CD14-positive monocyte (primary cell): ENCODE measurements at regions of chr3 and their contacts with region 1.

Region 1: DNA sequence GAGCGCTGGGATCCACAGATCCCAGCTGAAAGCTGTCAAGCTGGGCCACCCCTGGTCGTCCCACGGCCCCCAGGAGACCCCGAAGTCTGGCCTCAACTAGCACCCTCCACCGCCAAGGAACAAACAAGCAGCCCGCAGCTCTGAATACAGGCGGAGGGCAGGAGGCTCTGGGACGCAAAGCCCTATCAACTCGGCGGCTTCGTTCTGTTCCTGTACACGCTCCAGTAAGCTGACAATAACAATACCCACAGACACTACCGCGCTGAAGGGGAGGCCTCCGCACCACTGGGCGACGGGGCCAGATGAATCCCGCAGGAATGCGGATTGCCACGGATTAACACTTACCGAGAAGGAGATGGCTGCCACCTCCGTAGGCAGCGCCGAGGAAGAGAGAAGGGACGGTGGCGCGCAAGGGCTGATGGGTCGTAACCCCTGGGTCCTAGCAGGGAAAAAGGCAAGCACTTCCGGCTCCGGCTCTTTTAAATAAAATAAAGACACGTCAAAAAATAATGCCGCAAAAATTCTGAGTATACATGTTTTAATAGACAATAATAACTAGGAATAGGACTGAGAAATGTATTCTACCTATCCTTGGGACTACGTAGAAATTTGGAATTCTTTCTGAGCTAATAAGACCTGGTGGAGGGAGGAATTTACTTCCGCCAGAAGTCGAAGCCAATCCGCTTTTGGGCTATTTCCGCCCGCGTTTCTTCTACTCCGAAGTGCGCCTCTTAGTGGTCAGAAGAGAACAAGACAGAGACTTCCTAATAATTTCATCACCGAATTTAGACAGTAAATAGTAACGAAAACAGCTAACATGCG is at the start of gene RPL32:
- DNase-seq: peak; percentile 94 to 97 (median 96)
- H3K4me3 ChIP-seq: peak within 1 kb of the TSS; percentile 84 to 95 (median 85)
- H3K4me3 Mint-ChIP-seq: peak within 1 kb of the TSS; percentile 96 to 97
- H3K27ac ChIP-seq: peak within 1 kb of the TSS; percentile 88 to 98
- H3K27ac Mint-ChIP-seq: peak within 1 kb of the TSS; percentile 97 to 100 (median 99)
- H3K4me1 ChIP-seq: peaks cover 16 to 22% of the 10 kb centered on the region in 2 donors
- H3K4me1 Mint-ChIP-seq: peaks cover 42% of the 10 kb centered on the region
- H3K27me3 ChIP-seq: no peaks in the 10 kb centered on the region
- H3K27me3 Mint-ChIP-seq: peaks cover 0 to 2% (median 0%) of the 10 kb centered on the region in 3 donors
- CTCF ChIP-seq: peak; percentile 86
- polyA plus RNA-seq, gene RPL32: 932 to 1,052 (median 942) TPM

Region 2: GRCh38 chr3:12556671-12557472 is 284.5 kb before region 1 on chr3 and contains the start of gene MKRN2:
- intact Hi-C with region 1: loop called in 1 of 2 experiments (anchors 5 kb)
- DNase-seq: peak; percentile 82 to 83 (median 82)
- H3K4me3 ChIP-seq: peak within 1 kb of the TSS; percentile 48 to 89 (median 75)
- H3K4me3 Mint-ChIP-seq: peak within 1 kb of the TSS; percentile 83 to 97
- H3K27ac ChIP-seq: peak within 1 kb of the TSS; percentile 90 to 96
- H3K27ac Mint-ChIP-seq: peak within 1 kb of the TSS; percentile 89 to 96 (median 93)
- H3K4me1 ChIP-seq: peaks cover 35 to 37% of the 10 kb centered on the region in 2 donors
- H3K4me1 Mint-ChIP-seq: peaks cover 51% of the 10 kb centered on the region
- H3K27me3 ChIP-seq: peaks cover 2 to 7% of the 10 kb centered on the region in 2 donors
- H3K27me3 Mint-ChIP-seq: peaks cover 19 to 39% (median 30%) of the 10 kb centered on the region in 3 donors
- CTCF ChIP-seq: no peak
- polyA plus RNA-seq, gene MKRN2: 18.2 to 30.9 (median 29.6) TPM

Region 3: GRCh38 chr3:12750223-12750622 is 91.1 kb before region 1 on chr3:
- intact Hi-C with region 1: no loop called
- DNase-seq: no peak
- H3K4me3 ChIP-seq: no peak overlapping the region
- H3K4me3 Mint-ChIP-seq: no peak overlapping the region
- H3K27ac ChIP-seq: no peak overlapping the region
- H3K27ac Mint-ChIP-seq: no peak overlapping the region
- H3K4me1 ChIP-seq: no peaks in the 10 kb centered on the region
- H3K4me1 Mint-ChIP-seq: peaks cover 3% of the 10 kb centered on the region
- H3K27me3 ChIP-seq: no peaks in the 10 kb centered on the region
- H3K27me3 Mint-ChIP-seq: peaks cover 0 to 21% (median 15%) of the 10 kb centered on the region in 3 donors
- CTCF ChIP-seq: no peak

Region 4: DNA sequence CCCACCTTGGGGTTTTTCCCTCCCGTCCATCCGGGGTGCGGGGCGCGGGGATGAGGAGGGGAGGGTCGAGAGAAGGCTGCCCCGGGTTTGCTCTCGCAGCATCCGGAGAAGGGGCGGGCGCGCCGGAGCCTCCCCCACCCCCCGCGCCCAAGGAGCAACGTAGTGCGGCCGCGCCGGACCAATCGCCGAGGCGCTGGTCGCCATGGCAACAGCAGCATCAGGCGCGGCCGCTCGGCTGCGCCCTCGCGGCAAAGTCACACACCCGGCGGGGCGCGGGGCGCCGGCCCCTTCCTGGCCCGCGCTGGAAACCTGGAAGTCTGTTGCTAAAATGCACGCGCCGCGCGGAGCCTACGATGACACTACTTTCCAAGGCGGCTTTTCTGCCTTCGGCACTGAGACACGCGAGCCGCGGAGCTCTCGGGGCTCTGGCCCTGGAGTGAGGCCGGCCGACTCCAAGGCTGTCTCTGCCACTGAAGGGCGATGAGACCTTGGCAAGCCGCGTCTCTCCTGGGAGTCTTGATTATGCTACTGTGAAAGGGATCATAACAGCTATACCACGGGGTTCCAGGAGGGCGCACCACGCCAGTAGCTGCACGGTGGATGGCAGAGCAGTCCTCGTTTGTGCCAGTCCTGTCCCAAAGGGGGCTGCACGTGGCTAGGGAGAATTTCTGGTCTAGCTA is 232.1 kb after region 1 on chr3 and contains the start of gene IQSEC1:
- intact Hi-C with region 1: no loop called
- DNase-seq: peak; percentile 62 to 67 (median 64)
- H3K4me3 ChIP-seq: no peak within 1 kb of the TSS
- H3K4me3 Mint-ChIP-seq: peak within 1 kb of the TSS in 1 of 2 donors; percentile 85
- H3K27ac ChIP-seq: no peak within 1 kb of the TSS
- H3K27ac Mint-ChIP-seq: peak within 1 kb of the TSS in 4 of 7 donors; percentile 9 to 79 (median 56)
- H3K4me1 ChIP-seq: peaks cover 40 to 50% of the 10 kb centered on the region in 2 donors
- H3K4me1 Mint-ChIP-seq: peaks cover 50% of the 10 kb centered on the region
- H3K27me3 ChIP-seq: peaks cover 15 to 33% of the 10 kb centered on the region in 2 donors
- H3K27me3 Mint-ChIP-seq: peaks cover 27 to 52% (median 49%) of the 10 kb centered on the region in 3 donors
- CTCF ChIP-seq: no peak
- polyA plus RNA-seq, gene IQSEC1: 17.7 to 61.7 (median 30.3) TPM